B cell (primary cell): ENCODE measurements at regions of chr7 and their contacts with region 1.

Region 1: GRCh38 chr7:37201003-37201875 is 247.4 kb downstream of the ELMO1 start:
- DNase-seq: peak; percentile 52
- ATAC-seq: peak; percentile 36
- H3K4me3 ChIP-seq: no peak overlapping the region
- H3K4me3 Mint-ChIP-seq: no peak overlapping the region
- H3K27ac ChIP-seq: no peak overlapping the region
- H3K27ac Mint-ChIP-seq: no peak overlapping the region
- H3K4me1 ChIP-seq: peaks cover 3 to 9% of the 10 kb centered on the region in 2 donors
- H3K4me1 Mint-ChIP-seq: peaks cover 25% of the 10 kb centered on the region
- H3K27me3 ChIP-seq: no peaks in the 10 kb centered on the region
- H3K27me3 Mint-ChIP-seq: no peaks in the 10 kb centered on the region
- CTCF ChIP-seq: peak; percentile 66

Region 2: GRCh38 chr7:36440880-36441279 is 760.4 kb before region 1 on chr7:
- CTCF ChIA-PET with region 1: interaction called, 20 read pairs
- POLR2A ChIA-PET with region 1: no interaction called
- intact Hi-C with region 1: loop called (anchors 1 kb)
- DNase-seq: peak; percentile 29
- ATAC-seq: no peak
- H3K4me3 ChIP-seq: no peak overlapping the region
- H3K4me3 Mint-ChIP-seq: no peak overlapping the region
- H3K27ac ChIP-seq: no peak overlapping the region
- H3K27ac Mint-ChIP-seq: no peak overlapping the region
- H3K4me1 ChIP-seq: no peaks in the 10 kb centered on the region
- H3K4me1 Mint-ChIP-seq: no peaks in the 10 kb centered on the region
- H3K27me3 ChIP-seq: no peaks in the 10 kb centered on the region
- H3K27me3 Mint-ChIP-seq: no peaks in the 10 kb centered on the region
- CTCF ChIP-seq: peak; percentile 45

Region 3: DNA sequence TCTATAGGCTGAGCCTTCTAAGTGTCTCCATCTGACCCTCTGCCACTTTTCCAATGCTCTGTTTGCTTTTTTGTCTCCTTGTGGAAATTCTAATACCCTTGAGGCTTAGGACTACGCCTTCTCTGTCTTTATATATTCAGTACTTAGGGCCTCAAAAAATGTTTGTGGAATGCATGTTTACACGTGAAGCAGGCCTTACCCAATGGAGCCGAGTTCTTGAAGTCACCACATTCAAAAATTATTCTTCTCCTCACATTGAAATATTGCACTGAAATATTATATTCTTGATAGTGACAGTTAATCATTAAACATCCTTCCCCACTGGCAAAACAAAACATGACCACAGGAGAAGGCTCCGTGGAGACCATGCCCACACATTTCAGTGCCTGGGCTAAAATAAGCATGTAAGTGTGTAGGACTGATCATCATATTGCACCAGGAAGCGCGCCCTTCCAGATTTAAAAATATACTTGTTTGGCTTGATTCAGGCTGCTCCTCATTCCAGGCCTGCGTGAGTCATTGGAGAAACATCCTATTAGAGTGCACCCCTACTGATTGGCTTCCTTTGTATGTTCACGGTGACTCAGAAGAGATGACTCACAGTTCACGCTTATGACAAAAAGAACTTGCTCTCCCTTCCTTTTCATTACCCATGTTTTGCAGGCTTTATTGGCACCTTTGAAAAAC is 169.5 kb before region 1 on chr7:
- CTCF ChIA-PET with region 1: no interaction called
- POLR2A ChIA-PET with region 1: no interaction called
- intact Hi-C with region 1: no loop called
- DNase-seq: no peak
- ATAC-seq: no peak
- H3K4me3 ChIP-seq: no peak overlapping the region
- H3K4me3 Mint-ChIP-seq: no peak overlapping the region
- H3K27ac ChIP-seq: no peak overlapping the region
- H3K27ac Mint-ChIP-seq: no peak overlapping the region
- H3K4me1 ChIP-seq: no peaks in the 10 kb centered on the region
- H3K4me1 Mint-ChIP-seq: no peaks in the 10 kb centered on the region
- H3K27me3 ChIP-seq: no peaks in the 10 kb centered on the region
- H3K27me3 Mint-ChIP-seq: no peaks in the 10 kb centered on the region
- CTCF ChIP-seq: no peak

Region 4: DNA sequence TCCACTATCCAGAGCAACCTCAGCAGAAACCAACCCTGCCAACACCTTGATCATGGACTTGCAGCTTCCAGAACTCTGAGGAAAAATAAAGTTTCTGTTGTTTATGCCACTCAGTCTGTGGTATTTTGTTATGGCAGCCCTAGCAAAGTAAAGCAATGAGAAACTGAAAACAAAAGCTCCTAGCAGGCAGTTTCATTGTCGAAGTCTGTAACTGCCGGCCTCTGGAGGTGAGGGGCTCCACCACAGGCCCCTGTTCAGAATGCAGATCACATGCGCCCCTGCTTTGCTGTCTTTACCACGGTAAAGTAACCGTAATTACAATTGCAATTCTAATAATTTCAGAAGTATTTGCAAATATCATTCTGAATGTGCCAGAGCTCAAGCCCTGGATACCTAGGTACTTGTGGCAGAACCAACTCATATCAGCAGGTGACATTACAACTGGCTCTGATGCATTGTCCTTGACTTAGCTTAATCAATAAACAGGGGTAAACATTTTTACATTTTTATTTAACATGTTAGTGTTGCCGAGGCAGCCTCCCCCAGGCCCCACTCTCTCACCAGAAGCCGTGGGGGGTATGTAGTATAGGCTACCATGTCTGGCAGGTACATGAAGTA is 54.2 kb after region 1 on chr7:
- CTCF ChIA-PET with region 1: no interaction called
- POLR2A ChIA-PET with region 1: no interaction called
- intact Hi-C with region 1: no loop called
- DNase-seq: no peak
- ATAC-seq: no peak
- H3K4me3 ChIP-seq: no peak overlapping the region
- H3K4me3 Mint-ChIP-seq: no peak overlapping the region
- H3K27ac ChIP-seq: no peak overlapping the region
- H3K27ac Mint-ChIP-seq: peak overlapping the region; percentile 10
- H3K4me1 ChIP-seq: peaks cover 10 to 14% of the 10 kb centered on the region in 2 donors
- H3K4me1 Mint-ChIP-seq: peaks cover 27% of the 10 kb centered on the region
- H3K27me3 ChIP-seq: no peaks in the 10 kb centered on the region
- H3K27me3 Mint-ChIP-seq: no peaks in the 10 kb centered on the region
- CTCF ChIP-seq: no peak

Region 5: DNA sequence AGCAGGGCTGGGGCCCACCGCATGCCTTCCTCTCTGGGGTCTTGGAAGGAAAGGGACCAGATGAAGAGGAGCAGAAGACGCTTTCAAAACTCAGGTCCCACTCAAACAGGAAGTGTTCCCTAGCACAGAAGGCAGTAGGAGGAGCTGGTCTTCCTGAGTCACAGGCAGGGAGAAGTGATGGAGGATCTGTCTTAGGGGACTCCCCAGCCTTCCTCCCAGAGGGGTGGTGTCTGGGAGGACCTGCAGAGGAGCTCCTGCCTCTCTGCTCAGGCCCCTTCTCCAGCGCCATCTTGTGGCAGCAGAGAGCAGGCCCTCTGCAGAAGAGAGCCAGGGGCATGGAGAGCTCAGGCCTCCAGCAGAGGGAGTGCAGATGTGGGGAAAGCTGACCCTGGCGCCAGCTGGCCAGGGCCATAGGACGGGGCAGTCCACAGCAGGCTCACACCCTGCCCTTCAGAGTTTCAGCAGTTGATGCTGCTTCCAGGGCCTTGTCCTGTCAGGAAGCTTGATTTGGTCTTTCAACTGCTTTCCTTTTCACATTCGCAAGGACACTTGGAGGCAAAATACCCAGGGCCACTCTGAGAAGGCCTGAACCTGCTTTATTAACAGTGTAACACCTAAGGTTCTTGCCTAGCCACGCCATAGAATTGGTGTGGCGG is 1134.4 kb after region 1 on chr7:
- CTCF ChIA-PET with region 1: no interaction called
- POLR2A ChIA-PET with region 1: no interaction called
- intact Hi-C with region 1: no loop called
- DNase-seq: peak; percentile 86
- ATAC-seq: peak; percentile 98
- H3K4me3 ChIP-seq: no peak overlapping the region
- H3K4me3 Mint-ChIP-seq: peak overlapping the region; percentile 11
- H3K27ac ChIP-seq: no peak overlapping the region
- H3K27ac Mint-ChIP-seq: peak overlapping the region; percentile 13
- H3K4me1 ChIP-seq: peaks cover 5 to 16% of the 10 kb centered on the region in 2 donors
- H3K4me1 Mint-ChIP-seq: peaks cover 15% of the 10 kb centered on the region
- H3K27me3 ChIP-seq: no peaks in the 10 kb centered on the region
- H3K27me3 Mint-ChIP-seq: no peaks in the 10 kb centered on the region
- CTCF ChIP-seq: peak; percentile 96